ENCODE measurements at regions of chr19 and their contacts with region 1.

Region 1: GRCh38 chr19:10112895-10113591 is 1.6 kb downstream of the P2RY11 start:
- DNase-seq: peak; percentile 77
- ATAC-seq: peak; percentile 37
- H3K4me3 Mint-ChIP-seq: peak overlapping the region; percentile 61
- H3K27ac Mint-ChIP-seq: peak overlapping the region; percentile 95
- H3K4me1 Mint-ChIP-seq: peaks cover 68% of the 10 kb centered on the region
- H3K27me3 Mint-ChIP-seq: no peaks in the 10 kb centered on the region

Region 2: GRCh38 chr19:10000171-10000826 is 112.7 kb before region 1 on chr19:
- CTCF ChIA-PET with region 1: no interaction called
- POLR2A ChIA-PET with region 1: no interaction called
- DNase-seq: peak; percentile 73
- ATAC-seq: peak; percentile 60
- H3K4me3 Mint-ChIP-seq: no peak overlapping the region
- H3K27ac Mint-ChIP-seq: no peak overlapping the region
- H3K4me1 Mint-ChIP-seq: peaks cover 11% of the 10 kb centered on the region
- H3K27me3 Mint-ChIP-seq: peaks cover 7% of the 10 kb centered on the region

Region 3: DNA sequence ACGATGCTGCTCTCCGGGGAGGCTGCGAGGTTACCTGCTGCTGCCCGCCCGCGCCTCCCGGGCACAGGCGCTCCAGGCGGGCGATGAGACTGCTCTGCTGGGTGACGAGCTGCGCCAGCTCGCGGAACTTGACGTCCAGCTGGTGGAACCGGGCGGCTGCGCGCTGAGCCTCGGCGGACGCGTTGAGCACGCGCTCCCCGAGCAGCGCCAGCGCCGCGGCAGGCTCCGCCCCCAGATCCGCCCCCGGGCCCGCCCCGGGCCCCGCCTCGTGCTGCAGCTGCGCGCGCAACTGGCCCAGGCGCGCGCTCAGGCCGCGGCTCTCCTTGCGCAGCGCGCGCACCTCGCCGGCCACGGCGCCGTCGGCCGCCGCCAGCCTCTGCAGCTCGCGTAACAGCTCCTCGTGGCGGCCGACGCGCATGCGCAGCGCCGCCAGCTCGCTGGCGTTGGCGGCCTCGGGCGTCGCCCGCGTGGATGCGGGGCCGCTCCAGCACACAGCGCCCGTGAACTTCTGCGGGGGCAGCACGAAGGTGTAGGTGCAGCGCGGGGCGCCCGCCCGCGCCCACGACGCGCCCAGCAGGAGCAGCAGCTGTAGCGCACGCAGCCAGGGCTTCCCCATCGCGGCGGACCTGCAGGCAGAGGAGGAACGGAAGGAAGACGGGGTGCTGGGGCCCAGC is 17.0 kb before region 1 on chr19:
- CTCF ChIA-PET with region 1: interaction called, 135 read pairs
- POLR2A ChIA-PET with region 1: interaction called, 92 read pairs
- DNase-seq: peak; percentile 90
- ATAC-seq: peak; percentile 96
- H3K4me3 Mint-ChIP-seq: peak overlapping the region; percentile 54
- H3K27ac Mint-ChIP-seq: peak overlapping the region; percentile 72
- H3K4me1 Mint-ChIP-seq: peaks cover 43% of the 10 kb centered on the region
- H3K27me3 Mint-ChIP-seq: no peaks in the 10 kb centered on the region